ENCODE measurements at regions of chr9 and their contacts with region 1.

Region 1: GRCh38 chr9:123349691-123350480 is 6.1 kb upstream of the CRB2 start:
- DNase-seq: peak; percentile 66
- H3K4me3 Mint-ChIP-seq: no peak overlapping the region
- H3K27ac Mint-ChIP-seq: no peak overlapping the region
- H3K4me1 Mint-ChIP-seq: no peaks in the 10 kb centered on the region
- H3K27me3 Mint-ChIP-seq: peaks cover 44% of the 10 kb centered on the region
- CTCF ChIP-seq: peak; percentile 80

Region 2: GRCh38 chr9:123081824-123082223 is 268.1 kb before region 1 on chr9:
- CTCF ChIA-PET with region 1: interaction called, 5 read pairs
- intact Hi-C with region 1: loop called (anchors 2 kb)
- DNase-seq: peak; percentile 6
- H3K4me3 Mint-ChIP-seq: no peak overlapping the region
- H3K27ac Mint-ChIP-seq: no peak overlapping the region
- H3K4me1 Mint-ChIP-seq: no peaks in the 10 kb centered on the region
- H3K27me3 Mint-ChIP-seq: no peaks in the 10 kb centered on the region
- CTCF ChIP-seq: no peak

Region 3: DNA sequence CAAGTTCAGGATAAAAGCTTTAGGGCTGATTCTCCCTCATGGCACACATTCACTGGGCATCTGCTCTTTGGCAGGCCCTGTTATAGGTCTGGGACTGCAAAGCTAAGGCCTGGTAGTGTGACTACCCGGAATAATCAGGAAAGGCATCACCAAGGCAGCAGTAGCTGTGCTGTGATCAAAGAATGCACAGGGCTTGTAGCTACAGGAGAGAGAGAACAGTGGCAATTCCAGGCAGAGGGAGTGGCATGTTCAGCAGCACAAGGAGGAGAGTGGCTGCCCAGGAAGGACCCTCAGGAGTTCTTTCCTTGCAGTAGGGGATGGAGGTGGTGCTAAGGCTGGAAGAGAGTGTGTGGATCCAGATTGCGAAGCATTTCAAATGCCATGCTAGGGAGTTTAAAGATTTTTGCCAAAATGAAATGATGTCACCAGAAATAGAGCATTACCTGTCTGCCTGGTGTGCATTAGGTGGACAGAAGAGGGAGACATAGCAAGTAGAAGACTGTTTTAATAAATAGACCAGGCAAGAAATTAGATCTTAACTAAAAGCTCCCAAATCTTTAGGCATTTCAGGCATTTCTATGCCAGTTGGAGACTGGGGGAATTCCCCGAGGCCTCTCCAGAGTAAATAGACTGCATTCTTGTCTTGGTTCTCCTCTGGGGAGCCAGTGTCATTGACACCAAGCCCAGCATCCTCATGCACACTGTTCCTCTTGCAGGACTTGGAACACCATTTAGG is 247.3 kb before region 1 on chr9:
- CTCF ChIA-PET with region 1: interaction called, 14 read pairs
- intact Hi-C with region 1: loop called (anchors 2 kb)
- DNase-seq: no peak
- H3K4me3 Mint-ChIP-seq: no peak overlapping the region
- H3K27ac Mint-ChIP-seq: no peak overlapping the region
- H3K4me1 Mint-ChIP-seq: no peaks in the 10 kb centered on the region
- H3K27me3 Mint-ChIP-seq: no peaks in the 10 kb centered on the region
- CTCF ChIP-seq: no peak

Region 4: GRCh38 chr9:123364241-123364824 is 14.4 kb after region 1 on chr9:
- CTCF ChIA-PET with region 1: no interaction called
- intact Hi-C with region 1: no loop called
- DNase-seq: no peak
- H3K4me3 Mint-ChIP-seq: no peak overlapping the region
- H3K27ac Mint-ChIP-seq: no peak overlapping the region
- H3K4me1 Mint-ChIP-seq: no peaks in the 10 kb centered on the region
- H3K27me3 Mint-ChIP-seq: peaks cover 62% of the 10 kb centered on the region
- CTCF ChIP-seq: no peak

Region 5: GRCh38 chr9:123389070-123389469 is 39.2 kb after region 1 on chr9:
- CTCF ChIA-PET with region 1: interaction called, 5 read pairs
- intact Hi-C with region 1: loop called (anchors 5 kb)
- DNase-seq: no peak
- H3K4me3 Mint-ChIP-seq: no peak overlapping the region
- H3K27ac Mint-ChIP-seq: no peak overlapping the region
- H3K4me1 Mint-ChIP-seq: no peaks in the 10 kb centered on the region
- H3K27me3 Mint-ChIP-seq: no peaks in the 10 kb centered on the region
- CTCF ChIP-seq: no peak